ENCODE measurements at regions of chr12 and their contacts with region 1.

Region 1: DNA sequence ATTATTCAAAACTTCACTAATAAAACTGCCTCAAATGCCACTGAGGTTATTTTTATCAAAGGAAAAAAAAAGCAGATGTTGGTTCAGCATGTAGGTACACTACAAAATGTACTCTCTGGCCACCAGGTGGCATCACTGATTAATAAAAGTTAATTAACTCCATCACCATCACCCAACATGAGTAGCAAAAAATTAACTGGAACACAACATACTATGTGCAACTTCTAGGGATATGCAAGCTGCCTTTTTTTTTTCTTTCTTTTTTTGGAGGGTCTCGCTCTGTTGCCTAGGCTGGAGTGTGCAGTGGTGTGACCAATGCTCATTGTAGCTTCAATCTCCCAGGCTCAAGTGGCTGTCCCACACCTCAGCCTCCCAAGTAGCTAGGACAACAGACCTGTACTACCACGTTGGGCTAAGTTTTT is 43.8 kb upstream of the NR2C1 start:
- DNase-seq: peak; percentile 75
- ATAC-seq: peak; percentile 86
- H3K4me3 Mint-ChIP-seq: no peak overlapping the region
- H3K27ac Mint-ChIP-seq: no peak overlapping the region
- H3K4me1 Mint-ChIP-seq: no peaks in the 10 kb centered on the region
- H3K27me3 Mint-ChIP-seq: no peaks in the 10 kb centered on the region
- CTCF ChIP-seq: peak; percentile 78

Region 2: GRCh38 chr12:95217377-95218149 is 100.4 kb after region 1 on chr12 and contains the starts of genes FGD6 and VEZT:
- CTCF ChIA-PET with region 1: interaction called, 10 read pairs
- POLR2A ChIA-PET with region 1: no interaction called
- intact Hi-C with region 1: no loop called
- DNase-seq: peak; percentile 99
- ATAC-seq: peak; percentile 95
- H3K4me3 Mint-ChIP-seq: peak within 1 kb of the TSS; percentile 89
- H3K27ac Mint-ChIP-seq: peak within 1 kb of the TSS; percentile 98
- H3K4me1 Mint-ChIP-seq: peaks cover 33% of the 10 kb centered on the region
- H3K27me3 Mint-ChIP-seq: peaks cover 6% of the 10 kb centered on the region
- CTCF ChIP-seq: peak; percentile 54
- total RNA-seq, gene FGD6: 0.41 to 0.54 TPM
- total RNA-seq, gene VEZT: 46.9 to 51.7 TPM

Region 3: DNA sequence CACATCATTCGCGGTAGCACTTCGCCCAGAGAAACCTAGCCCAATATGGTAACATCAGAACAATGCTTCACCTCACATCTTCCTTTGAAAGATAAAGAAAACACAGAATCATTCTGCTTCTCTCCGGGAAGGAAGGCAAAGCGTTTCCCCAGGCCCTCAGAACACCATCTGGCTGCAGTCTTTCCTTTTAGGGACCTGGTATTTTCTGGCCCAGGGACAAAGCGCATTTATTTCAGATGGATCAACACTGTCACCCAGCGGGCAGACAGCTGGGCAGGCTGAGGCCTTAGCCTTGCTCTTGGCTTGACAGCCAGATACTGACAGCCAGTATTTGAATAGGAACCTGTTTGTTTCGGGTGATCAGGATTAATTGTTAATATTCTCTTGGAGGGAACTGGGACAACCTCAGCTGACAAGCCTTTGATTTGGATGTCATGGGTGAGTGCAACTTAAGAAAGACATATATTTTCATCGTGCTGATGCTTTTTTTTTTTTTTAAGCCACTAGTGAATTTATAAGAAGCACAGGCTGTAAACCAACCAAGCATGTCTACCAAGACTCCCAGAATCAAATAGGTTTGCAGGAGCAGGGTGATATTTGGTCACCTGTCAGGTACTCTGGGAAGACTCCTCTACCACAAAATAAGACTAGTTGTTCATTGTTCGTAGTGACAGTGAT is 219.3 kb after region 1 on chr12:
- CTCF ChIA-PET with region 1: interaction called, 5 read pairs
- POLR2A ChIA-PET with region 1: no interaction called
- intact Hi-C with region 1: loop called (anchors 5 kb)
- DNase-seq: no peak
- ATAC-seq: no peak
- H3K4me3 Mint-ChIP-seq: no peak overlapping the region
- H3K27ac Mint-ChIP-seq: no peak overlapping the region
- H3K4me1 Mint-ChIP-seq: peaks cover 4% of the 10 kb centered on the region
- H3K27me3 Mint-ChIP-seq: no peaks in the 10 kb centered on the region
- CTCF ChIP-seq: no peak

Region 4: GRCh38 chr12:95532851-95533250 is 415.7 kb after region 1 on chr12:
- CTCF ChIA-PET with region 1: interaction called, 50 read pairs
- POLR2A ChIA-PET with region 1: no interaction called
- intact Hi-C with region 1: loop called (anchors 2 kb)
- DNase-seq: peak; percentile 25
- ATAC-seq: no peak
- H3K4me3 Mint-ChIP-seq: no peak overlapping the region
- H3K27ac Mint-ChIP-seq: no peak overlapping the region
- H3K4me1 Mint-ChIP-seq: peaks cover 13% of the 10 kb centered on the region
- H3K27me3 Mint-ChIP-seq: no peaks in the 10 kb centered on the region
- CTCF ChIP-seq: no peak

Region 5: GRCh38 chr12:95538656-95539055 is 421.5 kb after region 1 on chr12:
- CTCF ChIA-PET with region 1: interaction called, 50 read pairs
- POLR2A ChIA-PET with region 1: no interaction called
- intact Hi-C with region 1: loop called (anchors 2 kb)
- DNase-seq: no peak
- ATAC-seq: no peak
- H3K4me3 Mint-ChIP-seq: no peak overlapping the region
- H3K27ac Mint-ChIP-seq: no peak overlapping the region
- H3K4me1 Mint-ChIP-seq: peaks cover 2% of the 10 kb centered on the region
- H3K27me3 Mint-ChIP-seq: no peaks in the 10 kb centered on the region
- CTCF ChIP-seq: no peak